ENCODE measurements at regions of chr20 and their contacts with region 1.

Region 1: GRCh38 chr20:47785854-47786764 is 828 bp upstream of the SULF2 start:
- DNase-seq: peak; percentile 56 to 82 (median 77)
- ATAC-seq: peak; percentile 70 to 93 (median 86)
- H3K4me3 ChIP-seq: peak overlapping the region; percentile 28 to 88 (median 66)
- H3K27ac ChIP-seq: peak overlapping the region; percentile 26 to 87 (median 78)
- H3K4me1 ChIP-seq: peaks cover 0 to 34% (median 18%) of the 10 kb centered on the region in 12 donors
- H3K27me3 ChIP-seq: peaks cover 0 to 36% (median 7%) of the 10 kb centered on the region in 9 donors
- CTCF ChIP-seq: peak; percentile 51 to 87 (median 73)
- POLR2A ChIP-seq: no peak

Region 2: GRCh38 chr20:47663333-47664067 is 122.6 kb before region 1 on chr20:
- intact Hi-C with region 1: loop called in 3 of 10 experiments (anchors 5 kb)
- DNase-seq: peak; percentile 69 to 87 (median 79)
- ATAC-seq: peak; percentile 70 to 90 (median 79)
- H3K4me3 ChIP-seq: no peak overlapping the region
- H3K27ac ChIP-seq: no peak overlapping the region
- H3K4me1 ChIP-seq: peaks cover 0 to 19% (median 9%) of the 10 kb centered on the region in 12 donors
- H3K27me3 ChIP-seq: no peaks in the 10 kb centered on the region
- CTCF ChIP-seq: peak; percentile 92 to 99 (median 98)
- POLR2A ChIP-seq: no peak

Region 3: DNA sequence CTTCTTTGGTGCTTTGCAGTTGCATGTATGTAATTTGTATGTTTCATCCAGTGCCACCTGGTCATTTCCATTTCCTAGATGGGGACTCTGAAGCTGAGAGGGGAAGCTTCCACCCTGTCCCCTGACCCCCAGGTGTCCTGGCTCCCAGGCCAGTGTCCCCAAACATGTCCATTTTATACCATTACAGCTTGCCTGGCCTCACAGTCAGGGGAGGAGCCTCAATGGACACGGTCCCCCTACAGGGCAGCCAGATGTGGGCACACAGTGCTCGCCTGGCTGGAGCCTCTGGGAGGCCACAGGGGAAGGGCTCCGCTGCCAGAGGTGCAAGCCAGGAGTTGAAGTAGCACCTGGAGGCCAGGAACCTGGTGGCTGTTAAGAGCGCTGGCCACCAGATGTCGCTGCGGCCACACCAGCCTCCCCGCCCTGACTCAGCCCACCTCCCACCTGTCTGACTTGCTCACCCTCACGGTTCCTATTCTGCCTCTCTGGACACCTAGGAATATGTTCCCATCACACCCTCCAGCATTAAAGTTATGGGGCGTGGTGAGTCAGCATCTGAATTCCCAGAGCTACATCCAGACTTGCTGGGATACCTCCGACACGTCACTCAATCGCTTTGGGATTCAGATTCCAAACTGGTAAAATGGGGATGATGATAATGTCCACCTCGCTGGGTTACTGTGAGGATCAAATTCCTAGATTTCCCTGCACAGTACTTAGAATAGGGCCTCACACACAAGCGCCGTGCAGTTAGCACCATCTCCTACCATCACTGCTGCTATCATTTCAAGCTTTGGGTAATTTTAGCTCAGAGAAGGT is 108.3 kb before region 1 on chr20:
- intact Hi-C with region 1: loop called in 8 of 10 experiments (anchors 2 to 10 kb)
- DNase-seq: no peak
- ATAC-seq: no peak
- H3K4me3 ChIP-seq: no peak overlapping the region
- H3K27ac ChIP-seq: no peak overlapping the region
- H3K4me1 ChIP-seq: peaks cover 0 to 26% (median 16%) of the 10 kb centered on the region in 12 donors
- H3K27me3 ChIP-seq: no peaks in the 10 kb centered on the region
- CTCF ChIP-seq: peak; percentile 62 to 82 (median 72)
- POLR2A ChIP-seq: peak in 1 of 2 donors; percentile 23

Region 4: GRCh38 chr20:47725248-47725973 is 60.7 kb before region 1 on chr20:
- intact Hi-C with region 1: loop called in 5 of 10 experiments (anchors 1 to 5 kb)
- DNase-seq: peak; percentile 71 to 79 (median 77)
- ATAC-seq: peak in 3 of 4 donors; percentile 60 to 64 (median 61)
- H3K4me3 ChIP-seq: no peak overlapping the region
- H3K27ac ChIP-seq: no peak overlapping the region
- H3K4me1 ChIP-seq: peaks cover 0 to 26% (median 6%) of the 10 kb centered on the region in 12 donors
- H3K27me3 ChIP-seq: no peaks in the 10 kb centered on the region
- CTCF ChIP-seq: peak; percentile 77 to 91 (median 86)
- POLR2A ChIP-seq: no peak

Region 5: GRCh38 chr20:47735412-47736400 is 50.4 kb before region 1 on chr20:
- intact Hi-C with region 1: loop called in 1 of 10 experiments (anchors 5 kb)
- DNase-seq: peak; percentile 27 to 70 (median 48)
- ATAC-seq: peak; percentile 42 to 85 (median 73)
- H3K4me3 ChIP-seq: no peak overlapping the region
- H3K27ac ChIP-seq: no peak overlapping the region
- H3K4me1 ChIP-seq: peaks cover 0 to 16% (median 0%) of the 10 kb centered on the region in 12 donors
- H3K27me3 ChIP-seq: no peaks in the 10 kb centered on the region
- CTCF ChIP-seq: no peak
- POLR2A ChIP-seq: no peak

Region 6: DNA sequence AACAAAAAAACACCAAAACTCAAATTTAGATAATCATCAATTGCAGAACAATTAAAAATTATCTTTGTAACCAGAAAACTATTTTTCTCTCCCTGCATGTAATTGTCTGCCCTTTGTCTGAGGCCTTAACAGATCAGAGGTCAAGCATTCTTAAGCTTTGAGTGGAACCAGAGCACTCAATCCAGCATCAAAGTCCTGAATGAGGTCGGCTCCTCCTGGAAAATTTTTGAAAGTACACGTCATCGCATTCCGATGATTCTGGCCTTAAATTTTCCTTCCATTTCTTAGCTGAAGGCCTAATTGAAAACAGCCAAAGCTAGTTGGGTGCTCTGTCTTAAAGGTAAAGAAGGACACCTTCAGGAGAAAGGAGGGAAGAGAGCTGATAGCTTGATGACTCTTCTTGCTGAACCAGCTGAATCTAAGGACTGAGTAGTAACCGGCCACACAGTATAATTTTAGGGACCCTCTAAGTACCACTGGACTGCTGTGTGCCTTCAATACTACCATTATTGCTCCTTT is 509.4 kb after region 1 on chr20:
- intact Hi-C with region 1: loop called in 4 of 10 experiments (anchors 5 to 10 kb)
- DNase-seq: peak in 2 of 5 donors; percentile 22 to 31
- ATAC-seq: peak in 3 of 4 donors; percentile 46 to 86 (median 78)
- H3K4me3 ChIP-seq: no peak overlapping the region
- H3K27ac ChIP-seq: peak overlapping the region in 6 of 12 donors; percentile 24 to 61 (median 36)
- H3K4me1 ChIP-seq: peaks cover 0 to 34% (median 12%) of the 10 kb centered on the region in 12 donors
- H3K27me3 ChIP-seq: peaks cover 0 to 8% (median 0%) of the 10 kb centered on the region in 9 donors
- CTCF ChIP-seq: peak in 9 of 12 donors; percentile 10 to 50 (median 30)
- POLR2A ChIP-seq: no peak

Measured in heart left ventricle (tissue), 16 donors.